MCF 10A (cell line): ENCODE measurements at regions of chr3 and their contacts with region 1.

Region 1: GRCh38 chr3:139111392-139112229 is 66.9 kb upstream of the PRR23C start:
- DNase-seq: peak; percentile 62
- H3K4me3 Mint-ChIP-seq: no peak overlapping the region
- H3K27ac Mint-ChIP-seq: no peak overlapping the region
- H3K4me1 Mint-ChIP-seq: peaks cover 7% of the 10 kb centered on the region
- H3K27me3 Mint-ChIP-seq: no peaks in the 10 kb centered on the region
- CTCF ChIP-seq: peak; percentile 73

Region 2: DNA sequence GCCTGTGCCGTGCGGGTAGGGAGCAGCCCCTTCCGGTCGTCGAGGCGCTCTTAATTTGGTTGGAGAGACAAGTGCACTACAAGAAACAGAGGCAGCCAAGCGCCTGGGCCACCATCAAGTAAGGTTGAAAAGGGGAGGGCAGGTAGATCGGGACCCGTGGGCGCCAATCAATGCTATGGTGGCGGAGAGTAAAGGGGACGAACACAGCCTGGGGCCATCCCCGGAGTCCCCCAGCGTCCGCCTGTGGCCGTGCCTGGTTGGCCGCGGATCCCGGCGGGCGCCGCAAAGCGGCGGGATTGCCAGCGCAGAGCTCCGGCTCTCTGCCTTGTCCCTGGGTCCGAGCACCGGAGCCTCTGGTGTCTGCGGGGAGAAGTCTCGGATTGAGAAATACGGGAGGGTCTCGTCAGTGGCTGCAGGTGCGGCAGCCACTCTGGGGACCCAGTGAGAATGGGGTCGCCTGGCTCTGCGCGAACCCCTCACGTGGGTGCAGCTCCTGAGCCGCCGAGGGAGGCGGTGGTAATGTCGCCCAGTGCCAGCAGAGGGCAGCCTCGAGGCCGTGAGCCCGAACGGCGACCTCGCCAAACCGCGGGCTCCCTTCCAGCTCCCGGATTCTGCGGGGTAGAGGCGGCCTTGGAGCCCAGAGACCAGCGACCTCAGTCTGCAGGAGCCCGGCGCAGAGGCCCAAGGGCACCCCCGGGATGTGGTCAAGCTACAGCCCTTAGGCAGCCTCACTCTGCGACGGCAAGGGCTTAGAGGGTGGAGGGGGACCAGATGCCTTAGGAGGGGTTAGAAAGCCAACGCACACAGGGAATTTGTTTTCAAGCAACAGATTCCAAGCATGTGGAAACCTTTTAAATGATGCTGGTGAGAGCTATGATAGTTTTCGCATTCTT is 175.5 kb before region 1 on chr3:
- CTCF ChIA-PET with region 1: interaction called, 15 read pairs
- POLR2A ChIA-PET with region 1: no interaction called
- intact Hi-C with region 1: loop called (anchors 5 kb)
- DNase-seq: peak; percentile 59
- H3K4me3 Mint-ChIP-seq: peak overlapping the region; percentile 68
- H3K27ac Mint-ChIP-seq: no peak overlapping the region
- H3K4me1 Mint-ChIP-seq: no peaks in the 10 kb centered on the region
- H3K27me3 Mint-ChIP-seq: peaks cover 16% of the 10 kb centered on the region
- CTCF ChIP-seq: peak; percentile 84

Region 3: DNA sequence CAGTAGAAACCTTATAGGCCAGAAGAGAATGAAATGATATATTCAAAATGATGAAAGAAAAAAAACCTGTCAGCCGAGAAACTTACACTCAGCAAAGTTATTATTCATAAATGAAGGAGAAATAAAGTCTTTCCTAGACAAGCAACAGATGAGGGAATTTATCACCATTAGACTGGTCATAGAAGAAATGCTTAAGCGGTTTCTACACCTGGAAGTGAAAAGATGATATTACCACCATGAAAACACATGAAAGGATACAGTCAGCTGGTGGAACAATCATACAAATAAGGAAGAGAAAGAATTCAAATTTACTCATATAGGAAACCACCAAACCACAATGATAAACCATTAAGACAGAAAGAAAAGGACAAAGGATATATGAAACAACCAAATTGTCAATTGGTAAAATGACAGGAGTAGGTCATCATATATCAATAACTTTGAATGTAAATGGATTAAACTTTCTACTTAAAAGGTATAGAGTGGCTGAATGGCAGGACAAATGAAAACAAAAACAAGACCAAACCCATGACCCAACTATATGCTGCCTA is 37.0 kb before region 1 on chr3:
- CTCF ChIA-PET with region 1: no interaction called
- POLR2A ChIA-PET with region 1: no interaction called
- intact Hi-C with region 1: no loop called
- DNase-seq: no peak
- H3K4me3 Mint-ChIP-seq: no peak overlapping the region
- H3K27ac Mint-ChIP-seq: no peak overlapping the region
- H3K4me1 Mint-ChIP-seq: no peaks in the 10 kb centered on the region
- H3K27me3 Mint-ChIP-seq: peaks cover 23% of the 10 kb centered on the region
- CTCF ChIP-seq: no peak

Region 4: GRCh38 chr3:139101396-139101795 is 10.2 kb before region 1 on chr3:
- CTCF ChIA-PET with region 1: interaction called, 74 read pairs
- POLR2A ChIA-PET with region 1: interaction called, 3 read pairs
- intact Hi-C with region 1: no loop called
- DNase-seq: no peak
- H3K4me3 Mint-ChIP-seq: no peak overlapping the region
- H3K27ac Mint-ChIP-seq: no peak overlapping the region
- H3K4me1 Mint-ChIP-seq: no peaks in the 10 kb centered on the region
- H3K27me3 Mint-ChIP-seq: no peaks in the 10 kb centered on the region
- CTCF ChIP-seq: no peak

Region 5: DNA sequence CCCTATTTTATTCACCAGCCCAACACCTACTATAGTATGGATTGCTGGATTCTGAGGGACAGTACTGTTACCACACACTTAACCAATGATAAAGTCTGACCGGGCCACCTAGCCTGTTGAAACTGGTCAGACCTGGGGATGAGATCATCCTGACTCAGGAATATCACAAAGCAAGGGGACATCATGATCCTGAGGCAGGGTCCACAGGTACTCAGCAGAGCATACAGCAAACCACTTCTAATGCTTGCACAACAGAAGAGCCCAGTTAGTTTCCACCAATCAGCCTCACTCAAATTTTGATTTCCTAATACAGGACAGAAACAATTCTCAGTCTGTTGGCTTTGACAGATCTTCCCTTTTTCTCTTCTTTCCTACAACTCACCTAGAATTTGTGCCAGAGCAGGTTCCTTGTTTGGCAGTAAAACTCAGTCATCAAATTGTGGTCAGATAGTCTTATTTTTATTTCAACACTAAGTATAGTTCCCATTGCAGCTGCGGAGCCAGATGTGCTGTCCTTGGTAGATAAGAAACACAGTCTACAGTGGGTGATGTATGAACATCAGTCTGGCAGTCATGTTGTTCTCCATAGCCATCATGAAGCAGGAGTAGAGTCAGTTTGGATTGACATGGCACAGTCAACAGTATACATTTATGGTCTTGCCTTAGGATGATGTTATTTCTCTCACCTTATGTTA is 23.2 kb after region 1 on chr3:
- CTCF ChIA-PET with region 1: interaction called, 25 read pairs
- POLR2A ChIA-PET with region 1: no interaction called
- intact Hi-C with region 1: no loop called
- DNase-seq: no peak
- H3K4me3 Mint-ChIP-seq: no peak overlapping the region
- H3K27ac Mint-ChIP-seq: no peak overlapping the region
- H3K4me1 Mint-ChIP-seq: no peaks in the 10 kb centered on the region
- H3K27me3 Mint-ChIP-seq: no peaks in the 10 kb centered on the region
- CTCF ChIP-seq: no peak

Region 6: GRCh38 chr3:139302084-139302800 is 190.6 kb after region 1 on chr3:
- CTCF ChIA-PET with region 1: interaction called, 28 read pairs
- POLR2A ChIA-PET with region 1: no interaction called
- intact Hi-C with region 1: no loop called
- DNase-seq: peak; percentile 94
- H3K4me3 Mint-ChIP-seq: peak overlapping the region; percentile 13
- H3K27ac Mint-ChIP-seq: peak overlapping the region; percentile 90
- H3K4me1 Mint-ChIP-seq: peaks cover 32% of the 10 kb centered on the region
- H3K27me3 Mint-ChIP-seq: no peaks in the 10 kb centered on the region
- CTCF ChIP-seq: no peak

Region 7: DNA sequence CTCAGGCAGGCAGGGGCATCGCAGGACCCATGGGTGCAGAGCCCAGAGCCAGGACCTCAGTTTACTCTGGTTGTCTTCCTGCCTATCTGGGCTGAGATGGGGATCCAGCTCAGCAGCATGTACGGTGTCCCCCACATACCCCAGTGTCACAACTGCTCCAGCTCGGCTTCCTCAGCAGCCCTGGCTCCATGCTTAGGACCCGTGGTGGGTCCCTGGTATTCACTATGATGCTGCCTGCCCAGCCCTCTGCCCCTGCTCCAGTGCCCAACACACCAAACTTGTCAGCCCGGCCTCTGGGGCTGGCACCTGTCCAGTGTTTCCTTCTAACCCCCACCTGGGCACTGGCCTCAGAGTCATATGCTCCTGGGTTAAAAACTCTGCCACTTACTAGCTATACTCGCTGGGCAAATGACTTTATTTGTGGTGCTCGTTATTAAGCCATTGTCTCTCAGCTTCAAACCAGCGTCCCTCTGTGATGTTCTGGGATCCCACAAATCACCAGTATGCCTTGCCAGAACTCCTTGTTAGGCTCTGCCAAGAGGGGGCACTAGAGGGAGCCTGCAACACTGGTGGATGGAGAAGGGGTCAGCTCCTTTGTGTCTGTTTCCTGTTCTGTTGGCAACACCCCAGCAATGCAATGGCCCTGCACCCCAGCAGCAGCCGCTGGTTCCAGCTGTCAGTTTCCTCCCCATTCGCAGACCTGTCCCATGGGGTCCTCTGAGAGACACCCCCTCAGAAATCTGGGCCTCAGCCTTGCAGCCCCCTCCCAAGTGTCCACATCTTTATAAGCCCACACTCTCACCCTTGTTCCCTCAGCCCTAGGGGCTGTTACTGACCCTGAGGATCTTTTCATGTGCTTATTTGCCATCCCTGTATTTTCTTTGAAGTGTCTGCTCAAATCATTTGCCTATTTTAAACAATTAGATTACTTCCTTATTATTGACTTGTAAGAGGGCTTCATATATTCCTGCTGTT is 208.1 kb after region 1 on chr3:
- CTCF ChIA-PET with region 1: interaction called, 56 read pairs
- POLR2A ChIA-PET with region 1: interaction called, 4 read pairs
- intact Hi-C with region 1: no loop called
- DNase-seq: peak; percentile 13
- H3K4me3 Mint-ChIP-seq: no peak overlapping the region
- H3K27ac Mint-ChIP-seq: no peak overlapping the region
- H3K4me1 Mint-ChIP-seq: peaks cover 19% of the 10 kb centered on the region
- H3K27me3 Mint-ChIP-seq: no peaks in the 10 kb centered on the region
- CTCF ChIP-seq: peak; percentile 22

Region 8: DNA sequence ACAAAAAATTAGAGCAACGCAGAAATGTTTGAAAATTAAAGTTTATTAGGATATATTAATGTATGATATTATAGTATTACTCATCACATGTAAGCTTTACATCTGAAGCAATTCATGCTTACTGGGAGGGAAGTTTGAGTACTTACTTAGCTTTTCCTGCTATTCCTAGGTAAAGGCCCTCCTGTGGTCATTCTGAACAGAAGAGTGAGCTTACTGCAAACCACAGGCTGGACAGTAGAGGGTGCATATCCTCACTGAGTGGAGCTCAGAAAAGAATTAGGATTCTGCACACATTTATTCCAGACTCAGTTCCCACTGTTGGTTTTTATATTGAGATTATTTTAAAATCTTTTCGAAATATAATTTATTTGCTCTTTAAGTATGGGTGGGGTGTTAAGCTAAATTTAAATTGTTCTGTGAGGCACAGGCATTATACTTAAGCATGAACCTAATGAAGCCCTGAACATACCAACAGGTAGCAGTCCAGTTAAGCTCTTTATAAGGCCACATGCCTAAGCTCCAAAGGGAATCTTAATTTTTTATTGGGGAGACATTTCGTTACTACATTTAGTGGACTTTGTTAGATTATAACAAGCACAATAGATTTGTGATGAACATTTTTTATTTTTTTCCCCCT is 242.4 kb after region 1 on chr3:
- CTCF ChIA-PET with region 1: interaction called, 36 read pairs
- POLR2A ChIA-PET with region 1: interaction called, 3 read pairs
- intact Hi-C with region 1: no loop called
- DNase-seq: peak; percentile 64
- H3K4me3 Mint-ChIP-seq: no peak overlapping the region
- H3K27ac Mint-ChIP-seq: no peak overlapping the region
- H3K4me1 Mint-ChIP-seq: no peaks in the 10 kb centered on the region
- H3K27me3 Mint-ChIP-seq: no peaks in the 10 kb centered on the region
- CTCF ChIP-seq: peak; percentile 73